HEK293T (cell line): ENCODE measurements at regions of chr3 and their contacts with region 1.

Region 1: DNA sequence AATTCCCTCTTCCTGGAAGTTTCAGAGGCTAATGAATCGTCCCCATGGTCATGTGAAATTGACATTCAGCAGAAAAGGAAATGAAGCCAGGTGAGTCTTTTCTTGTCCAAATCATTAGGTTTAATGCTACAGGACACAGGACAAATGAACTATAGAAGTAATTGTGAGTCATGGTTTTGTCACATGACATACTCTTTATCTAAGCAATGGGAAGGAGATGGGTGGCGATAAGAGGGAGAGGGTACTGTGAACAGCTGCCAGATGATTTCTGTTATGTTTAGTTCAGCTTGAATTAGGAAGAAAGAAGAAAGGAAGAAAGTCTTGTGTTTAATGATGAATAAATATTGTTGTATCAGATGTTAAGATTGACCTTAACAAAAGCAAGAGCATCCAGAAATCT is 515.4 kb upstream of the ZNF717 start:
- DNase-seq: no peak

Region 2: DNA sequence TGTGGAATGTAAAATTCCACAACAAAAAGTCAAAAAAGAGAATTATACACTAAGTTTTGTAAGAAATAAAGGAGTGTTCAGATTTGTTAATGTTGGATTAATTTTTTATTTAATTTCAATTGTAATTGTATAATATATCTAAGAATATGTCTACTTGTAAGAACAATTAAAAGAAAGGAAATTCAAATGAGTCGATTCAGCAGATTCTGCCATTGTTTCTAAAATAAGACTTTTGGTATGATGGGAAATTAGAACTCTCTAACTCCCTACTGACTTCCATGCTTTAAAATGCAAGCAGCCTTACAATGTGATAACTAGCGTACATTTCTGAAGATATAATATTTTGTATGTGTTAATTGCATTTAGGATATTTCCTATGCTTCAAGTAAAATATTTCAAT is 119.5 kb before region 1 on chr3:
- CTCF ChIA-PET with region 1: no interaction called
- POLR2A ChIA-PET with region 1: no interaction called
- DNase-seq: no peak

Region 3: DNA sequence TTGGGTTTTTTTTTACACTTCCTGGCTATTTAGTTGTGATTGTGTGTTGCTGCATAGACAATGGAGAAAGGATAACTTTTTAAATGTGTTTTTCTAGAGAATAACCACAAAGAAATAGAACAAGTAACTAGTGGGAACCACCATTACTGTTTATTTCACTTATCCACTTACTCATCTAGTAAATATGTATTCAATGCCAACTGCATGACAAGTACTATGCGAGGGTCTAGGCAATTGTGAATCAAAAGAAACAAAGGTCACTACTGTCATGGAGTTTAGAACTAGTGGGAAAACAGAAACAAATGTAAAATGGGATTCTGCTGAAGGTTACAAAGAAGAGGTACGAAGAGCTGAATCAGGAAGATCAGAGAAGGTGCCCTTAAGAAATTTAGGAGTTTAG is 138.2 kb after region 1 on chr3:
- CTCF ChIA-PET with region 1: no interaction called
- POLR2A ChIA-PET with region 1: no interaction called
- DNase-seq: no peak

Region 4: DNA sequence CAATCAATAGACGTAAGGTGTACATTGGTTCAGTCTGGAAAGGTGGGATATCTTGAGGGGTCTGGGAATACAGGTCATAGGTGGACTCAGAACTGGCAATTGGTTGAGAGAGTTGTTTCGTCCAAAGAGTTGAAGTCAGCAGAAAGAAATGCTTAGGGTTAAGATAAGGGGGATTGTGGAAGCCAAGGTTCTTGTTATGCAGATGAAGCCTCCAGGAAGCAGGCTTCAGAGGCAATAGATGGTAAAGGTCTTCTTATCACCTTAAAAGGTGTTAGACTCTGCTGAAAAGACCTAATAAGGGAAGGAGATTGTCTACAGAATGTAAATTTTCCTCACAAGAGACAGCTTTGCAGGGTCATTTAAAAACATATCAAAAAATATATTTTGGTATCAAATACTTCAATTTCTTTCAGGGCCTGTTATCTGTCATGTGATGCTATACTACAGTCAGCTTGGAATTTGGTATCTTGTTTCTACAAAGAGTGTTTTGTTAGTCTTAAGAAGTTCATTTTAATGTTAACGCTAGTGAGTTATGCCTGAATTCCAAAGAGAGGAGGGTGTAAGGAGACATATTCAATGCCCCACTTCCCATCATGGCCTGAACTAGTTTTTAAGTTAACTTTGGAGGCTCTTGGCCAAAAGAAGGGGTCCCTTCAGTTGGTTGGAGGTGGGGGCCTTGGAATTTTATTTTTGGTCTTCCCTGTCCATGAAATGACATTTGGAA is 360.9 kb after region 1 on chr3:
- CTCF ChIA-PET with region 1: no interaction called
- POLR2A ChIA-PET with region 1: no interaction called
- DNase-seq: no peak

Region 5: DNA sequence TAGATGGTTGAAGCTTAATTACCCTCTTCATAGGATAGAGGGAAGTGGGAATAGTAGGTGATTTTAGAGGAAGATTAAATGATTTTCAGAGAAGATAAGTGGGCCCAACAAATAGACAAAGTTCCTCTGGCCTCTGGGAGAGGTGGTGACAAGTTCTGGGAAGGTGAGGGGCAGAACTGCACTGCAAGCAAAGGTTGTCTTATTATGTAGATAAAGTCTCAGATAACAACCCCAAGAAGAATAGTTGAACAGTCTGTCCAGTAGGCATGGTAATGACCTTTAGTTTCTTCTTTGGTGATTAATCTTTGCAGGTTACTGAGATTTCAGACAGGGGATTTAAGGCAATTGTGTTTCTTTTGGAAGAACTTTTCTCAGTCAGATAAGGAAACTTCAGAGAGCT is 1178.3 kb after region 1 on chr3:
- CTCF ChIA-PET with region 1: interaction called, 10 read pairs
- POLR2A ChIA-PET with region 1: no interaction called
- DNase-seq: no peak